ENCODE measurements at regions of chr13 and their contacts with region 1.

Region 1: DNA sequence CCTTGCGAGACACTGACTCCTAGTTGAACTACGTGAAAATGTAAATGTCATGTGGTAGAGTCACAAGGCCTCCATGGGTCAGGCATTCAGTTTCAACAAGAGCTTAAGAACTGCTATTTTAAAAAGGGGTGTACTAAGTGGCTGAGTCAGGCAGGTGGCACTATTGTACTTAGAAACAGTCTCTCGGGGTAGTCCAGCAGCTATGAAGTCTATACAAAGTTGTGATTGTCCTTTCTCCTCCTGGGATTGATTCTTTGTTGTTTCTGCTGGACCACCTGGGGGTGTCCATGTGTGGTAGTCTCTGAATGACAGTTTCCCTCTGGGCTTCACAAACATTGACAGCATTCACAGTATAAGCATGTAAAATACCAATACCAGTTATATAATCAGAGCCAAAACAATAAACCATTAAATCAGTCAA is 33.0 kb downstream of the UGGT2 start:
- DNase-seq: no peak
- H3K4me3 ChIP-seq: no peak overlapping the region
- H3K27ac ChIP-seq: no peak overlapping the region
- H3K4me1 ChIP-seq: no peaks in the 10 kb centered on the region
- H3K27me3 ChIP-seq: no peaks in the 10 kb centered on the region
- CTCF ChIP-seq: peak in 3 of 4 experiments; percentile 35 to 49 (median 43)
- EP300 ChIP-seq: no peak
- POLR2A ChIP-seq: no peak

Region 2: DNA sequence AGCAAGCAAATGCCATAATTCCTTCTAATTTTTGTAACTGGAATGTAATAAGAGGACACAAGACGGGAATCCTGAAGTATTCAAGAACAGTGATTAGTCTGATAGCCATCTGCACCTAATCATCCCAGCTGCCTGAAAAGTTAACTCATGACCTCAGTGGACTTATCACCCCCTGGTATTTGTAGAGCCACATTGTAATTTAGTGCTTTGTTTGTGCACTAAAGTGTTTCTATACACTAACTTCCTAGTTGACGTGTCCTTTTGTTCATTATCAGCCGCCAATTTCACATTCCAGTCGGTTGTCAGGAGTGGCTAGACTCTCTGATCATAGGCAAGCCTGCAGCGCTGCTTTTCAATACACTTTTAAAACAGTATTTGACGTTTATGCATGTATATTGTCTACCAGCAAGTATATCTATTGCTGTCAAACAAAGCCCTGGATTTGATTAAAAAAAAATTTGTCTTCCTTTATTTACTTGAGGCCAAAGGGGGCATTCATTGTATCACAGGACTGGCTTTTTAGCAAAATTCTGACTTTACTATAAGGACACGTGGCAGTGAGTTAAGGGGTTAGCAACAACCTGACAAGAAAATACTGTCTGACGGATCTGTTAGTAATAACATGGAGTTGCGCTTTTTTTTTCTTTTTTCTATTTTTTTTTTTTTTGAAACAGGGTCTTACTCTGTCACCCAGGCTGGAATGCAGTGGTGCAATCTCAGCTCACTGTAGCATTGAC is 1297.4 kb before region 1 on chr13:
- intact Hi-C with region 1: no loop called
- DNase-seq: no peak
- H3K4me3 ChIP-seq: no peak overlapping the region
- H3K27ac ChIP-seq: no peak overlapping the region
- H3K4me1 ChIP-seq: no peaks in the 10 kb centered on the region
- H3K27me3 ChIP-seq: peaks cover 0 to 11% (median 4%) of the 10 kb centered on the region in 3 donors
- CTCF ChIP-seq: no peak
- EP300 ChIP-seq: no peak
- POLR2A ChIP-seq: no peak

Region 3: GRCh38 chr13:95896302-95896701 is 123.9 kb before region 1 on chr13:
- intact Hi-C with region 1: no loop called
- DNase-seq: no peak
- H3K4me3 ChIP-seq: no peak overlapping the region
- H3K27ac ChIP-seq: no peak overlapping the region
- H3K4me1 ChIP-seq: no peaks in the 10 kb centered on the region
- H3K27me3 ChIP-seq: no peaks in the 10 kb centered on the region
- CTCF ChIP-seq: no peak
- EP300 ChIP-seq: no peak
- POLR2A ChIP-seq: no peak

Region 4: GRCh38 chr13:96817336-96817941 is 797.3 kb after region 1 on chr13:
- intact Hi-C with region 1: loop called (anchors 10 kb)
- DNase-seq: no peak
- H3K4me3 ChIP-seq: no peak overlapping the region
- H3K27ac ChIP-seq: no peak overlapping the region
- H3K4me1 ChIP-seq: no peaks in the 10 kb centered on the region
- H3K27me3 ChIP-seq: no peaks in the 10 kb centered on the region
- CTCF ChIP-seq: peak in 2 of 4 experiments; percentile 26 to 33
- EP300 ChIP-seq: no peak
- POLR2A ChIP-seq: no peak

Region 5: DNA sequence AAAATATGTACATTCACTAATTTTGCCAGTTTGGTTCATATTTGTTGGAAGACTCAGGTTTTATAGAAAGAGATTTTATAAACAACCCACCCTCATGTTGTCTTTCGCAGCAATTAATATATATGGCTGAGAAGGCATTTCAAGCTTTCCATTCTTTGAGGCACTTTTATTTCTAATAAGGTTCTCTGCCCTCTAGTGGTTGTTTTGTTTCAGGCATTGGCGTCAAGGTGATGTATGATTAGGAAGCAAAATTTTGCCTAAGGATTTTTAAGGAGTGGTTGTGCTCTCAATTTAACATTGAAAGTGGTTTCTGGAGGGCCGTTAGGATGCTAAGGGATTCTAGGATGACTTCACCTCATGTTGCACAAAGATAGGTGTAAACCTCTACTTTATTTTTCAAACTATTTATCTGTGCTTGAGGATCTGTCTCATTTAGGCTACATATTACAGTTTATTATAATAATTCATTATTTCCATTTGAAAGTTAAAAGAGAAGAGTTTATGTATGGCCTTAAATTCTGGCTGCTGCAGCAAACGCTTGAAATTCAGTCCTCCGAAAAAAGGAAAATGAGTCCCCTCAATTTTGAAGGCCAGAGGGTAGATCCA is 938.2 kb after region 1 on chr13:
- intact Hi-C with region 1: loop called (anchors 5 kb)
- DNase-seq: no peak
- H3K4me3 ChIP-seq: no peak overlapping the region
- H3K27ac ChIP-seq: no peak overlapping the region
- H3K4me1 ChIP-seq: no peaks in the 10 kb centered on the region
- H3K27me3 ChIP-seq: no peaks in the 10 kb centered on the region
- CTCF ChIP-seq: peak in 2 of 4 experiments; percentile 47 to 63
- EP300 ChIP-seq: no peak
- POLR2A ChIP-seq: no peak